ENCODE measurements at regions of chr3 and their contacts with region 1.

Region 1: DNA sequence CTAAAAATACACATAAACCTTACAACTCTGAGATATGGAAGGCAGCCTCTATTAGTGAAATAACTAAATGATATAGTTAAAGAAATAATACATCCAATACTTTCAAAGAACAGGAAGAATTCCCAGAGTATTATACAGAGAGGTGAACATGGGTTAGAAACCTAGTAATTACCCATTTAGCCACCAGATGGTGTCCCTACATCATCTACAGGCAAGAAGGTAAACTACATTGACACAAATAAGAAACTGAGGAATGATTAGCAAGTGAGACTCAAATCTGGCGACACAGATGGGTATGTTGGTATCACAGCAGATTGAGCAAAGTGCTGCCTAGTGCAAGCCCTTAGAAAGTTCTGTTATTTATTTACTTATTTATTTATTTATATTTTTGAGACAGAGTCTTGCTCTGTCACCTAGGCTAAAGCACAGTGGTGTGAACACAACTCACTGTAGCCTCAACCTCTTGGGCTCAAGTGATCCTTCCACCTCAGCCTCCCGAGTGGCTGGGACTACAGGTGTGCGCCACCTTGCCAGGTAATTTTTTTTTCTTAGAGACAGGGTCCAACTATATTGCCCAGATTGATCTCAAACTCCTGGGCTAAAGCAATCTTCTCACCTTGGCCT is 28.2 kb downstream of the NEK4 start:
- DNase-seq: peak; percentile 58
- ATAC-seq: no peak
- H3K4me3 ChIP-seq: no peak overlapping the region
- H3K4me3 Mint-ChIP-seq: no peak overlapping the region
- H3K27ac ChIP-seq: no peak overlapping the region
- H3K27ac Mint-ChIP-seq: no peak overlapping the region
- H3K4me1 ChIP-seq: no peaks in the 10 kb centered on the region
- H3K4me1 Mint-ChIP-seq: no peaks in the 10 kb centered on the region
- H3K27me3 ChIP-seq: no peaks in the 10 kb centered on the region
- H3K27me3 Mint-ChIP-seq: no peaks in the 10 kb centered on the region
- CTCF ChIP-seq: peak; percentile 77

Region 2: GRCh38 chr3:52685709-52686691 is 56.5 kb before region 1 on chr3 and contains the starts of genes GNL3 and PBRM1:
- CTCF ChIA-PET with region 1: no interaction called
- POLR2A ChIA-PET with region 1: no interaction called
- intact Hi-C with region 1: no loop called
- DNase-seq: peak; percentile 98
- ATAC-seq: peak; percentile 86
- H3K4me3 ChIP-seq: peak within 1 kb of the TSS; percentile 67 to 90 (median 86)
- H3K4me3 Mint-ChIP-seq: peak within 1 kb of the TSS; percentile 99
- H3K27ac ChIP-seq: peak within 1 kb of the TSS; percentile 92 to 97
- H3K27ac Mint-ChIP-seq: peak within 1 kb of the TSS; percentile 100
- H3K4me1 ChIP-seq: peaks cover 20 to 21% of the 10 kb centered on the region in 2 donors
- H3K4me1 Mint-ChIP-seq: peaks cover 36% of the 10 kb centered on the region
- H3K27me3 ChIP-seq: no peaks in the 10 kb centered on the region
- H3K27me3 Mint-ChIP-seq: no peaks in the 10 kb centered on the region
- CTCF ChIP-seq: no peak
- total RNA-seq, gene GNL3: 67.3 and 68.5 TPM in 2 replicates
- total RNA-seq, gene PBRM1: 81.1 and 85.9 TPM in 2 replicates

Region 3: DNA sequence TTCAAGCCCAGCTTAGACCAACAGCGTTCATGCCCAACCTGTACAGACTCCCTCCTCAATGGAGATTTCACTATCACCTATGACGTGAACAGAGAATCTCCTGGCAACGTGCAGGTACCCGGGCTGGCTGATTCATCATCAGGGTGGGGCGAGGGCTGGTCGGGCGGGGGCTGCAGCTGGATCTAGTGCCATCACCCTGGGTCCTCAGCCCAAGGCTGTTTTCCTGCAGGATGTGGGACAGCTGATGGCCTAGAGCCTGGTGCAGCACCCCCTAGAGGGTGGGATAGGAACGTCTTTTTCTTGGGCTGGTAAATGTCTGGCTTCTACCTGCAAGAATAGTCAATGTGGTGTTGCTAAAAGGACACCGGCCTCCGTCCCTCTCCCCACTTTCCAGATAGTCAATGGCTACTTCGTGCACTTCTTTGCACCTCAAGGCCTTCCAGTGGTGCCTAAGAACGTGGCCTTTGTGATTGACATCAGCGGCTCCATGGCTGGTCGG is 56.5 kb after region 1 on chr3:
- CTCF ChIA-PET with region 1: interaction called, 6 read pairs
- POLR2A ChIA-PET with region 1: no interaction called
- intact Hi-C with region 1: loop called (anchors 1 kb)
- DNase-seq: peak; percentile 37
- ATAC-seq: peak; percentile 36
- H3K4me3 ChIP-seq: no peak overlapping the region
- H3K4me3 Mint-ChIP-seq: no peak overlapping the region
- H3K27ac ChIP-seq: no peak overlapping the region
- H3K27ac Mint-ChIP-seq: no peak overlapping the region
- H3K4me1 ChIP-seq: no peaks in the 10 kb centered on the region
- H3K4me1 Mint-ChIP-seq: no peaks in the 10 kb centered on the region
- H3K27me3 ChIP-seq: no peaks in the 10 kb centered on the region
- H3K27me3 Mint-ChIP-seq: no peaks in the 10 kb centered on the region
- CTCF ChIP-seq: peak; percentile 63

Region 4: GRCh38 chr3:52820736-52821135 is 78.2 kb after region 1 on chr3:
- CTCF ChIA-PET with region 1: interaction called, 12 read pairs
- POLR2A ChIA-PET with region 1: no interaction called
- intact Hi-C with region 1: no loop called
- DNase-seq: peak; percentile 41
- ATAC-seq: no peak
- H3K4me3 ChIP-seq: no peak overlapping the region
- H3K4me3 Mint-ChIP-seq: no peak overlapping the region
- H3K27ac ChIP-seq: no peak overlapping the region
- H3K27ac Mint-ChIP-seq: no peak overlapping the region
- H3K4me1 ChIP-seq: no peaks in the 10 kb centered on the region
- H3K4me1 Mint-ChIP-seq: no peaks in the 10 kb centered on the region
- H3K27me3 ChIP-seq: no peaks in the 10 kb centered on the region
- H3K27me3 Mint-ChIP-seq: no peaks in the 10 kb centered on the region
- CTCF ChIP-seq: peak; percentile 62

Region 5: GRCh38 chr3:52934630-52935530 is 192.3 kb after region 1 on chr3:
- CTCF ChIA-PET with region 1: interaction called, 5 read pairs
- POLR2A ChIA-PET with region 1: no interaction called
- intact Hi-C with region 1: loop called (anchors 1 kb)
- DNase-seq: peak; percentile 69
- ATAC-seq: peak; percentile 87
- H3K4me3 ChIP-seq: no peak overlapping the region
- H3K4me3 Mint-ChIP-seq: no peak overlapping the region
- H3K27ac ChIP-seq: peak overlapping the region in 1 of 2 donors; percentile 50
- H3K27ac Mint-ChIP-seq: peak overlapping the region; percentile 53
- H3K4me1 ChIP-seq: peaks cover 19 to 20% of the 10 kb centered on the region in 2 donors
- H3K4me1 Mint-ChIP-seq: peaks cover 21% of the 10 kb centered on the region
- H3K27me3 ChIP-seq: no peaks in the 10 kb centered on the region
- H3K27me3 Mint-ChIP-seq: no peaks in the 10 kb centered on the region
- CTCF ChIP-seq: peak; percentile 83

Region 6: GRCh38 chr3:53287131-53287629 is 544.6 kb after region 1 on chr3:
- CTCF ChIA-PET with region 1: no interaction called
- POLR2A ChIA-PET with region 1: no interaction called
- intact Hi-C with region 1: no loop called
- DNase-seq: no peak
- ATAC-seq: no peak
- H3K4me3 ChIP-seq: no peak overlapping the region
- H3K4me3 Mint-ChIP-seq: no peak overlapping the region
- H3K27ac ChIP-seq: no peak overlapping the region
- H3K27ac Mint-ChIP-seq: no peak overlapping the region
- H3K4me1 ChIP-seq: no peaks in the 10 kb centered on the region
- H3K4me1 Mint-ChIP-seq: no peaks in the 10 kb centered on the region
- H3K27me3 ChIP-seq: no peaks in the 10 kb centered on the region
- H3K27me3 Mint-ChIP-seq: no peaks in the 10 kb centered on the region
- CTCF ChIP-seq: no peak

Measured in B cell (primary cell).